ENCODE measurements at regions of chr20 and their contacts with region 1.

Region 1: DNA sequence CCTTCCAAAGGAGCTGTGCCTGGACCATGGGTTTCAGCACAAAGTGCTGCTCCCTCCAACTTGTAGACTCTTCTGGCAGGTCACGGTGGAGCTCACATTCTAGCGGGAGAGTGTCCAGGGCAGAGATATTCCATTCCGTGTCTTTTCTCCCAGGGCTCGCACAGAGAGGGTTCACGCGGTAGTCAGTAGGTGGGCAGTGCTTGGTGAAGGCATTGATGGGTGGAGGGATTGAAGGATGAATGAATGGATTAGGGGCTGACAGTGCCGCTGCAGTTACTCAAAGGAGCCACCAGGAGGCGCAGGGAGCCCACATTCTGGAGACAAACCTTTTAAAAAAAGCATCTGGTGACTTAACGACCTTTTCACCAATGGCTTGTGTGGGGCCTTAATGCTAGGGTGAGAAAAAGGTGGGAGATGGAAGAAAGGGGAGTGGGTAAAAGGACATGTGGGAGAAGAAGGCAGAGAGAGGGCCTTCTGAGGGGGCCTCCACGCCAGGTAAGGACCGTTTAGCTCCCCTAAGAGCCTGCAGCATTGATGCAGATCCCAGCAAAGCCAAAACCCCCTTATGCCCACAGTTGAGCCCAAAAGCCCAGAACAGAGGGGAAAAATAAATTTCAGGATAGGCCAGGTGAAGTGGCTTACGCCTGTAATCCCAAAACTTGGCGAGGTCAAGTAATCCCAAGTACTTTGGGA is 17.5 kb upstream of the FAM110A start:
- DNase-seq: peak; percentile 58
- ATAC-seq: peak; percentile 82
- H3K4me3 Mint-ChIP-seq: no peak overlapping the region
- H3K27ac Mint-ChIP-seq: no peak overlapping the region
- H3K4me1 Mint-ChIP-seq: no peaks in the 10 kb centered on the region
- H3K27me3 Mint-ChIP-seq: peaks cover 27% of the 10 kb centered on the region
- CTCF ChIP-seq: no peak

Region 2: DNA sequence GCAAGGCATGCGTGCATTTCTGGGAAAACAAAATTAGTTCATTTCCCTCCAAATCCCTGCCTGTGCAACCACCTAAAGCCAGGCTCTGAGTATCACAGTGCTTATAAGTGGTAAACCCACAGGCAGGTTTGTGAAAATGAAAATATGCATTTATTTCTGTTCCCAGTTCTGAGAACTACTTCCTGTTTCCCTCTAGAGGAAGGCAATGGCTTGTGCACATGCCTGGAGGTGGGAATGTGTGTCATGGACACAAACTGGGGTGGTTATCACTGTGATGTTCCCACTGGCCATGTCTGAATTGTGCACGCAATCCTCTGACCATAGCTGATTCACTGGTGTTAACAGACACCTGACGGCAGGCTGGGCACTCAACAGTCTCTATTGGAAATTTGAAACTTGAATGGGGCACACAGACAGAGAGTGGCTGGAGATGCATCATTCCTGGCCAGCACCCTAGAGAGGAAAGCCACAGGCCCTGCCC is 43.7 kb after region 1 on chr20:
- CTCF ChIA-PET with region 1: interaction called, 3 read pairs
- POLR2A ChIA-PET with region 1: no interaction called
- intact Hi-C with region 1: loop called (anchors 5 kb)
- DNase-seq: no peak
- ATAC-seq: no peak
- H3K4me3 Mint-ChIP-seq: no peak overlapping the region
- H3K27ac Mint-ChIP-seq: no peak overlapping the region
- H3K4me1 Mint-ChIP-seq: peaks cover 15% of the 10 kb centered on the region
- H3K27me3 Mint-ChIP-seq: no peaks in the 10 kb centered on the region
- CTCF ChIP-seq: no peak

Region 3: DNA sequence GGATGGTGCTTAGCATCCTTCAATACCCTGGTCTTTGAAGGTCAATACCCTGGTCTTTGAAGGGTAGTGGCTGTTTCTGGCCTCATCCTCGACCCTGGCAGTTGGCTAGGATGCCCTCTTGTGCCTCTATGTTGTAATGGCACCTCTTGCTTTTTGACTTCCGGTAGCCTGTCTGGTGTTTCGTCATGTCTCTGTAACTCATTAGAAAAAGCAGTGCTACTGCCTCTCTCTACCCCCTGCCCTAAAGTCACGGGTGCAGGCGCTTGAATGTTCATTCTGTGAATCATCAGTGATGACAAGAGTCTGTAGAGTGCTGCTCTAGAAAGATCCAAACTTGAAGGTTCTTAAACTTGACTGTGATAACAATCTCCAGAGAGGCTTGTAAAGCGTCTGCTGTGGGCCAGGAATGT is 157.7 kb after region 1 on chr20:
- CTCF ChIA-PET with region 1: no interaction called
- POLR2A ChIA-PET with region 1: no interaction called
- intact Hi-C with region 1: loop called (anchors 1 kb)
- DNase-seq: no peak
- ATAC-seq: peak; percentile 60
- H3K4me3 Mint-ChIP-seq: no peak overlapping the region
- H3K27ac Mint-ChIP-seq: no peak overlapping the region
- H3K4me1 Mint-ChIP-seq: no peaks in the 10 kb centered on the region
- H3K27me3 Mint-ChIP-seq: peaks cover 5% of the 10 kb centered on the region
- CTCF ChIP-seq: no peak

Region 4: GRCh38 chr20:1108437-1108920 is 292.4 kb after region 1 on chr20:
- CTCF ChIA-PET with region 1: interaction called, 12 read pairs
- POLR2A ChIA-PET with region 1: no interaction called
- intact Hi-C with region 1: loop called (anchors 1 kb)
- DNase-seq: peak; percentile 36
- ATAC-seq: peak; percentile 78
- H3K4me3 Mint-ChIP-seq: no peak overlapping the region
- H3K27ac Mint-ChIP-seq: no peak overlapping the region
- H3K4me1 Mint-ChIP-seq: peaks cover 4% of the 10 kb centered on the region
- H3K27me3 Mint-ChIP-seq: peaks cover 4% of the 10 kb centered on the region
- CTCF ChIP-seq: no peak

Region 5: DNA sequence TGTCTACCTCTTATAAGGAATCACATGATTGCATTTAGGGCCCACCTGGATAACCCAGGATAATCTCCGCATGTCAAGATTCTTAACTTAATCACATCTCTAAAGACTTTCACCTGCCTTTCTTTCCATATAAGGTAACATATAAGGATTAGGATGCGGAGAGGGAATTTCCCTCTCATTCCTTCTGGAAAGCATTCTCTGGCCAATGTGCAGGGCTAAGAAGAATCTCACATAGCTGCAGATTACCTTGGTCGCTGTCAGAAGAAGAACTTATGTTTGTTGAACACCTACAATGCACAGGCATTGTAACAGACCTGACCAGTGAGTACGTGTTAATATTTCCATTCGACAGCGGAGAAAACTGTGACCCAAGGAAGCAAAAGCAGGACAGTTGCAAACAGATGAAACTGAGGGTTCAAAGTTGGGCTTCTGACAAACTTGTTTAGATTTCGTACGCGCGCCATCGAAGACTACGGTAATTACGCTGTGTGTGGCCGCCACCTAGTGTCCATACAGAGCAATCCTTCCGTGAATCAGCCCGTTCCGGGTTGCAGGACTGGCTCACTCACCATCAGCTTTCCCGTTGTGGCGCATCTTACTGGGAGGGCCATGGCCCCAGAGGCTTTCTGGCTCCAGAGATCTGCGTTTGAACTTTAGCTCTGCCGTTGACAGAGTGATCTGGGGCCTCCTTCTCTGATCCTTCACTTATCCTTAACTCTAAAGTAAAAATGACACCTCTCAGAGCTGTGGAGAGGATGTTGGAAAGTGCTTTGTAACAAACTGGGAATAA is 396.7 kb after region 1 on chr20:
- CTCF ChIA-PET with region 1: interaction called, 12 read pairs
- POLR2A ChIA-PET with region 1: no interaction called
- intact Hi-C with region 1: loop called (anchors 1 kb)
- DNase-seq: peak; percentile 22
- ATAC-seq: peak; percentile 91
- H3K4me3 Mint-ChIP-seq: no peak overlapping the region
- H3K27ac Mint-ChIP-seq: no peak overlapping the region
- H3K4me1 Mint-ChIP-seq: peaks cover 7% of the 10 kb centered on the region
- H3K27me3 Mint-ChIP-seq: peaks cover 46% of the 10 kb centered on the region
- CTCF ChIP-seq: peak; percentile 64

Measured in activated B cell treated with CpG ODN at 0.5 μM for 24 hours (primary cell).